T-cell (primary cell): ENCODE measurements at regions of chr2 and their contacts with region 1.

Region 1: DNA sequence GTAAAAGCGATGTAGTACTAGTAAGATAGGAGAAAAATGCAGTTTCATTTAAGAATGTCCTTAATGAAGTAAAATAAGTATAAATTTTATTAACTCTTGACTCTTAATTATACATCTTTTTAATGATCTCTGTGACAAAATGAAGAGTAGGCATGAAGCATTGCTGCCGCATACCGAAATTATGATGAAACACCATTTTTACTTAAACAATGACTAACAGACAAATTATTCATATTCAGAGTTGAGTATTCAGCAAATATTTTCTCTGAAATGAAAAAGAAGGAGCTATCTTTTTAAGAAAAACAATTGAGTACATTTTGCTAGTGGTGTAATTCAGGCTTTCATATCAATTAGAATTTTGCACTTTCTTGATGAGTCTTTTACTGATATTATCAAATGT is 150.6 kb upstream of the DOCK10 start:
- DNase-seq: no peak
- ATAC-seq: no peak
- H3K4me3 ChIP-seq: no peak overlapping the region
- H3K4me3 Mint-ChIP-seq: no peak overlapping the region
- H3K27ac ChIP-seq: no peak overlapping the region
- H3K27ac Mint-ChIP-seq: no peak overlapping the region
- H3K4me1 ChIP-seq: no peaks in the 10 kb centered on the region
- H3K4me1 Mint-ChIP-seq: no peaks in the 10 kb centered on the region
- H3K27me3 ChIP-seq: no peaks in the 10 kb centered on the region
- H3K27me3 Mint-ChIP-seq: peaks cover 3 to 7% of the 10 kb centered on the region in 2 donors

Region 2: DNA sequence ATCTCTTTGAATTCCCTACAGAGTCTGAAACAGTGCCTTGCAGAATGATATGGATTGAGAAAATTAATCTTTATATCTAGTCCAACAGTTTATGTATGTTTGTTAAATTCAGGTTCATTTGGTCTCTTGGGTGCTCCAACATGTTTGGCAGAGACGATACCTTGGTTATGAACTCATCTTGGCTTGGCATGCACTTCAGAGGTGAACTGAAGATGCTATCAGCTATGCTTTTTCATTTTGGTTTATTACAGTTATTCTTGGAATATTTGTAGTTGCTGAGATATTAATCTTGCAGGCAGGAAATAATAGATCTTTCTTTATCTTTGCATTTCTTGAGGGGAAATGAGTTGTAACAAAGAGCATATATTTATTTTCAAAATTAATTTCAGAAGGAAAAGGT is 48.3 kb after region 1 on chr2:
- CTCF ChIA-PET with region 1: no interaction called
- POLR2A ChIA-PET with region 1: interaction called in 1 of 2 experiments, 11 read pairs
- DNase-seq: no peak
- ATAC-seq: no peak
- H3K4me3 ChIP-seq: no peak overlapping the region
- H3K4me3 Mint-ChIP-seq: no peak overlapping the region
- H3K27ac ChIP-seq: no peak overlapping the region
- H3K27ac Mint-ChIP-seq: no peak overlapping the region
- H3K4me1 ChIP-seq: no peaks in the 10 kb centered on the region
- H3K4me1 Mint-ChIP-seq: peaks cover 0 to 4% (median 0%) of the 10 kb centered on the region in 3 donors
- H3K27me3 ChIP-seq: no peaks in the 10 kb centered on the region
- H3K27me3 Mint-ChIP-seq: peaks cover 6 to 14% of the 10 kb centered on the region in 2 donors